Mammary epithelial cell (primary cell): ENCODE measurements at regions of chr14 and their contacts with region 1.

Region 1: DNA sequence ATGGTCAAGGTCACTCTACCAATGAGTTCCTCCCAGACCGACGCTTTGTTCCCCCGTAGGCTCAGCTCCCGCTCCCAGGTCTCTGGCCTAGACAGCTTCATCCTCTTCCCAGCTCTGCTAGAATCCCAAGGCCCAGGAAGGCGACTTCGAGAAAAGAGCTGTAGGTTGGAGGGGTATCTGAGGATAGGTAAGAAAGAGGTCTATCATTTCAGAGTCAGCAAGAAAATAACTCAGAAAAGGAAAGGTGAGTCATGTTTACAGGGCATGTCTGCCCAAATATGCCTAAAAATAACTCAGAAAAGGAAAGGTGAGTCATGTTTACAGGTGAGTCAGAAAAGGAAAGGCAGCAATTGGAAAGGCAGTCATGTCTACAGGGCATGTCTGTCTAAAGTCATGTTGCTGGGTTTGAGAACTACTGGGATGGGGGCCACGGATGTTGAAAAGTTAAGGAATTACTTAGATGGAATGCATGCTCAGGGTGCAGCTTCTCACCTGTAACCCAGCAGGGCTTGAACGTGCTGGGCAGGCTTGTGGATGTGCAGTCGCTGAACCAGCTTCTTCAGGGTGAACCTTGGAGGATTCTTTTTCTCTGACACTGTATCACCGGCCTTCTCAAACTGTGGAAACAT is 12.2 kb downstream of the TEP1 start:
- DNase-seq: peak; percentile 91
- H3K4me3 ChIP-seq: no peak overlapping the region
- H3K27ac ChIP-seq: peak overlapping the region; percentile 59
- H3K4me1 ChIP-seq: peaks cover 17% of the 10 kb centered on the region
- H3K27me3 ChIP-seq: no peaks in the 10 kb centered on the region
- CTCF ChIP-seq: no peak

Region 2: GRCh38 chr14:20343092-20343861 is 57.8 kb before region 1 on chr14 and contains the start of gene PARP2:
- CTCF ChIA-PET with region 1: no interaction called
- dilution Hi-C with region 1: no loop called
- in situ Hi-C with region 1: no loop called
- intact Hi-C with region 1: loop called (anchors 5 kb)
- DNase-seq: peak; percentile 100
- H3K4me3 ChIP-seq: peak within 1 kb of the TSS; percentile 85 to 97 (median 86)
- H3K27ac ChIP-seq: peak within 1 kb of the TSS; percentile 97
- H3K4me1 ChIP-seq: no peaks in the 10 kb centered on the region
- H3K27me3 ChIP-seq: no peaks in the 10 kb centered on the region
- CTCF ChIP-seq: no peak
- total RNA-seq, gene PARP2: 5.8 to 29.3 TPM

Region 3: DNA sequence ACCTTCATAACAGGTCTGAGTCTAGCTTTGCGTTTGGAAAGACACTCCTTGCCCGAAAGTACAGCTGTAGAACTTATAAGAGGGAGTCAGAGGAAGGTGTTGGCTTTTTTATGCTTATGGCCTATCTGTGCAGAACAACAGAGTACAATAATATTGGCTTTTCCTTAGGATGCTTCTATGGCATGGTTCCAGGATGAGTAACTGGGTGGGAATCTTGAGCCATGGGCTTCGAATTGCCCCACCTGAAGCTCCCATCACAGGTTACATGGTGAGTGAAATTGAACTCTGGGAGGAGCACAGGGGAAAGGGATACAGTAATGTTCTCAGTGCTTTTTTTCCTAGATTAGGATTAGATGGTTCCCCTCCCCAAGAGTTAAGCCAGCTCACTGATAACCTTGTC is 44.7 kb before region 1 on chr14:
- CTCF ChIA-PET with region 1: no interaction called
- dilution Hi-C with region 1: loop called (anchors 5 kb)
- in situ Hi-C with region 1: no loop called
- intact Hi-C with region 1: no loop called
- DNase-seq: peak; percentile 11
- H3K4me3 ChIP-seq: no peak overlapping the region
- H3K27ac ChIP-seq: no peak overlapping the region
- H3K4me1 ChIP-seq: peaks cover 4% of the 10 kb centered on the region
- H3K27me3 ChIP-seq: no peaks in the 10 kb centered on the region
- CTCF ChIP-seq: no peak

Region 4: DNA sequence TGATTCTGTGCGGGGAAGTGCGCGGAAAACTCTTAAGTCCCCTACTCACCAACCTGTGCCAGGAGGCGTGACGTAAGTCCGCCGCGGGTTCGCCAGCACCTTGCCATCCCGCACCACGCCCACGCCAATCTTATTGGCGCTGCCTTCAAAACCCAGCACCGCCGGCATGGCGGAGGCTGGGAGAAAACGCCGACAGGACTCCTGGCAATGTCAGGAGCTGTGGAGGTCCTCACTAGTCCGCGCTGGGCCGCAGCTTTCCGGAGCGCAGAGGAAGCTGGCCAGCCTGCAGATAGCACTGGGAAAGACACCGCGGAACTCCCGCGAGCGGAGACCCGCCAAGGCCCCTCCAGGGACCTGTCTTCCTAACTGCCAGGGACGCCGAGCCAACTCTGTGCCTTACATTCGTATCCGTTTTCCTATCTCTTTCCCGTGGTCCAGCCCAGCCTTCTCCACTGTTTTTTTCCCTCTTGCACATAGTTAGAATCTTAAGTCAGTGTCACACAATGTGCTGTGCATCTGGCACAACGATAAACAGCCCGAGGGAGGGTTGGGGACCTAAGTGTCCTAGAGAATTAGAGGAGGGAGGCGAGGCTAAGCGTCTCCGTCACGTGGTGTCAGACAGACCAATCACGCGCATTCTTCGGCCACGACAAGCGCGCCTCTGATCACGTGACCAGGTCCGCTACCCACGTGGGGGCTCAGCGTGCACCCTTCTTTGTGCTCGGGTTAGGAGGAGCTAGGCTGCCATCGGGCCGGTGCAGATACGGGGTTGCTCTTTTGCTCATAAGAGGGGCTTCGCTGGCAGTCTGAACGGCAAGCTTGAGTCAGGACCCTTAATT is 53.7 kb after region 1 on chr14 and contains the starts of genes APEX1 and OSGEP:
- CTCF ChIA-PET with region 1: no interaction called
- dilution Hi-C with region 1: no loop called
- in situ Hi-C with region 1: no loop called
- intact Hi-C with region 1: loop called (anchors 2 kb)
- DNase-seq: peak; percentile 98
- H3K4me3 ChIP-seq: peak within 1 kb of the TSS; percentile 94 to 97 (median 97)
- H3K27ac ChIP-seq: peak within 1 kb of the TSS; percentile 94
- H3K4me1 ChIP-seq: peaks cover 9% of the 10 kb centered on the region
- H3K27me3 ChIP-seq: no peaks in the 10 kb centered on the region
- CTCF ChIP-seq: no peak
- total RNA-seq, gene APEX1: 96.4 to 128 TPM
- total RNA-seq, gene OSGEP: 22.6 to 34.8 TPM

Region 5: DNA sequence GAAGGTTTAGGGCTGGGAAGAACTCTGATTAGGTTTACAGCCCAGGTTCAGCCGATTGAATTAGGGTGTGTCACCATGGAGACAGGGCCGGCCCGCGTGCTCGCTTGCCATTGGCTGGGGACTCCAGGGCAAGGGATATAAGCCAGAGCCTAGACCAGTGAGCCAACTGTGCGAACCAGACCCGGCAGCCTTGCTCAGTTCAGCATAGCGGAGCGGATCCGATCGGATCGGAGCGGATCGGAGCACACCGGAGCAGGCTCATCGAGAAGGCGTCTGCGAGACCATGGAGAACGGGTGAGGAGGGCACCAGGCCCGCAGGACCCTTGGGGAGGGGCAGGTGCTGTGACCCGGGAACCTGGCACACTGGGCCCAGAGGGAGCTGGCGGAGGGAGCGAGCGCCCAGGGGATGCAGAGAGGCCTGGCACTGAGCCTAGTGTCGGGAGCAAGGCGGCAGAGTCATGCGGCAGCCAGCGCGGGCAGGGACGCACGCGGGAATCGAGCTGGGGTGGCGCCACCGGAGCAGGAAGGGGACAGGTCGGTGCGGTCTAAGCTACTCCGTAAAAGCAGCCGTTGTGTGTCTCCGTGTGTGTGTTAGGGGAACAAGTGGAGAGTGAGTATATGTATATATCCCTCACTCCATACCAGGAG is 68.3 kb after region 1 on chr14 and contains the start of gene PNP:
- CTCF ChIA-PET with region 1: no interaction called
- dilution Hi-C with region 1: no loop called
- in situ Hi-C with region 1: no loop called
- intact Hi-C with region 1: loop called (anchors 2 kb)
- DNase-seq: peak; percentile 88
- H3K4me3 ChIP-seq: peak within 1 kb of the TSS; percentile 55 to 83 (median 79)
- H3K27ac ChIP-seq: peak within 1 kb of the TSS; percentile 74
- H3K4me1 ChIP-seq: peaks cover 7% of the 10 kb centered on the region
- H3K27me3 ChIP-seq: no peaks in the 10 kb centered on the region
- CTCF ChIP-seq: no peak
- total RNA-seq, gene PNP: 52.8 to 106 TPM

Region 6: DNA sequence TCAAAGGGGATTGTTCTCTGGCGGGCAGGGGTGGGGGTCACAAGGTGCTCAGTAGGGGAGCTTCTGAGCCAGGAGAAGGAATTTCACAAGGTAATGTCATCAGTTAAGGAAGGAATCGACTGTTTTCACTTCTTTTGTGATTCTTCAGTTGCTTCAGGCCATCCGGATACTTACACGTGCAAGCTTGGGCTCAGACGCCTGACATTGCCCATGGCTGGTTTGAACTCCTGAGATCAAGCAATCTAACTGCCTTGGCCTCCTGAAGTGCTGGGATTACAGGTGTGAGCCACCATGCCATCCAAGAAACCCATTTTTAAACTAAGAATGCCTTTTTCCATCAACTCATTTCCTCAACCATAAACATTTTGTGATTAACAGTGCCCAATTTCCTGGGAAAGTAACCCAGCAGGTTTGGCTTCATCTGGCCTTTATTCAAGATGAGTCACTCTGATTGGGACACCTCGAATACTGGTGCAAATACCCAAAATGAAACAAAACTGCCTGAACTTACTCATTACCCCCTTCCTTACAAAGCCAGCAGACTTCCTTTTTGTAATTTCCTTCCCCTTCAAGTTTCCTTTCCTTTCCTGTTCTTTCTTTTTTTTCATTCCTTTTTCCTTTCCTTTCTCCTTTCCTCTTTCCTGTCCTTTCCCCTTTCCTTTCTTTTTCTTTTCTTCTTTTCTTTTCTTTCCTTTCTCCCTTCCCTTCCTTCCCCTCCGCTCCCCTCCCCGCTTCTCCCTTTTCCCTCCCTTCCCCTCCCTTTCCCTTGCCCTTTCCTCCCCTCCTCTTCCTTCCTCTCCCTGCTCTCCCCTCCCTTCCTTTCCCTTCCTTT is 94.1 kb after region 1 on chr14:
- CTCF ChIA-PET with region 1: no interaction called
- dilution Hi-C with region 1: no loop called
- in situ Hi-C with region 1: no loop called
- intact Hi-C with region 1: no loop called
- DNase-seq: peak; percentile 84
- H3K4me3 ChIP-seq: no peak overlapping the region
- H3K27ac ChIP-seq: no peak overlapping the region
- H3K4me1 ChIP-seq: peaks cover 18% of the 10 kb centered on the region
- H3K27me3 ChIP-seq: no peaks in the 10 kb centered on the region
- CTCF ChIP-seq: no peak